ENCODE measurements at regions of chr14 and their contacts with region 1.

Region 1: GRCh38 chr14:91413547-91414474 is 3.8 kb downstream of the CCDC88C start:
- DNase-seq: peak in 1 of 2 donors; percentile 52
- H3K4me3 ChIP-seq: no peak overlapping the region
- H3K27ac ChIP-seq: peak overlapping the region in 1 of 2 donors; percentile 45
- H3K4me1 ChIP-seq: peaks cover 4% of the 10 kb centered on the region in 2 donors
- H3K27me3 ChIP-seq: no peaks in the 10 kb centered on the region
- CTCF ChIP-seq: no peak
- POLR2A ChIP-seq: no peak

Region 2: DNA sequence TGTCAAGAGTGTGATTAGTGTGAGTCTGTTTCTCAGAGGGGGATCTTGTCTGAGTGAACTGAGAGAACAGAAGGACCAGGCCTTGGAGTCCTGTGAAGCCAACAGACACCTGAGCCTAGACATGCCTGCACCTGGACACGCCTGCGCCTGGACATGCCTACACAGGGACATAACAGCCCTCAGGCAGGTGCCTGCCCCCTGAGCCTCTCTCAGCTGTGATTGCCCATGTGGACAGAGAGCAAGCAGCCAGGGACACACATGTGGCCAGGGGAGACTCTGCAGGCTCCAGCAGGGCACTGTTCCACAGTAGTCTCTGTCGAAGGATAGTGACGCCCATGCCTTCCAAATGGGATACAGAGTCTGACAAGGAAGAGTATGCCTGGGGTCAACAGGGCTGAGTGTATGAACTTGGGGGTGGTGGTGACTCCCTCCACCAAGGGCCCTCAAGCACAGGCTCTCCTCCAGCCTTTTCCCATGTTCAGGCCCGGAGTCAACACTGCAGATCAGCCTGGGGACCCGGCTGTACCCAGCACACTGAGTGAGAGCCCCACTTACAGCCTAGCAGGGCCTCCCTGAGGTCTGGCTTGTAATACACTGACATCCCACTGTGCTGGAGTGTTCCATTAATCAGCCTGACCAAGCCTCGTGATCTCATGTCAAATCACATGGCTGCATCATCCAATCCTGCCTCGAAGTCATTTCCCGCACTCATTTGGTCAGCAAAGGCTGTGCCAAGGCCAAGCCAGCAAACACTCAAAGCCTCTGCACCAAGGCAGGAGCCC is 844.0 kb before region 1 on chr14:
- intact Hi-C with region 1: loop called (anchors 5 kb)
- DNase-seq: peak in 1 of 2 donors; percentile 61
- H3K4me3 ChIP-seq: no peak overlapping the region
- H3K27ac ChIP-seq: peak overlapping the region in 1 of 2 donors; percentile 48
- H3K4me1 ChIP-seq: no peaks in the 10 kb centered on the region
- H3K27me3 ChIP-seq: no peaks in the 10 kb centered on the region
- CTCF ChIP-seq: no peak
- POLR2A ChIP-seq: no peak

Region 3: DNA sequence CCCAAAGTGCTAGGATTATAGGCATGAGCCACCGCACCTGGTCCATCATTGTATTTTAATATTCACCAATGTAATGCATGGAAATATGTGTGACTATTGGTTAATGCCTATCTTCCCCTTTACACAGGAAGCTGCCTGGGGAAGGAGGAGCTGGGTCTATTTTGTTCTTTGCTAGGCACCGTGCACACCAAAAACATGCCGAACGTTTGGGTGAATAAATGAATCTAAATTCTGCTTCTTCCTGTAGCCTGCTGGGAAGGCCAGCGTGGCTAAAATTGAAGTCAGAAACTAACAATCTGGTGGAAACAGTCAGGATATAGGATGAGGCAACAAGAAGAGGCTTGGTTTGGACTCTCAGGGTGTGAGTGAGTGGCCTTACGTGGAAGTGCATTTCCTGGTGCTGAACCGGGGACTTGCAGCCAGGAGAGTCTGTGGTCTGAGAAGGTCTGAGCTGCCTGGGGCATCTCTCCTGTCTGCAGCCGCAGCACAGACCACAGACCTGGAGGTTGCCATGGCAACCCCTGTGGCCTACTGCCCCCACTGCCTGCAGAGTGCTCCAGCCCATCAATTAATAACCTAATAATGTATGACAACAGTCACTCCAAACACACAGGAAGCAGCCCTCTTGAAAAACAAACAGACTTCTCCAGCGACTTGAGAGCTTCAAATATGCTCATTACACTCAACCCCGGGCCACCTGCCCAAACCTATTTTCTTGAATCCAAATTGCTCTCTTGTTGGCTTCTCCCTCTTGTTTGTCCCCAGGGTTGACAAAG is 163.8 kb before region 1 on chr14:
- intact Hi-C with region 1: no loop called
- DNase-seq: no peak
- H3K4me3 ChIP-seq: no peak overlapping the region
- H3K27ac ChIP-seq: peak overlapping the region; percentile 43 to 54
- H3K4me1 ChIP-seq: peaks cover 0 to 4% of the 10 kb centered on the region in 2 donors
- H3K27me3 ChIP-seq: no peaks in the 10 kb centered on the region
- CTCF ChIP-seq: peak in 1 of 3 donors; percentile 16
- POLR2A ChIP-seq: no peak

Region 4: GRCh38 chr14:91424813-91425530 is 11.2 kb after region 1 on chr14:
- intact Hi-C with region 1: loop called (anchors 1 kb)
- DNase-seq: no peak
- H3K4me3 ChIP-seq: no peak overlapping the region
- H3K27ac ChIP-seq: no peak overlapping the region
- H3K4me1 ChIP-seq: no peaks in the 10 kb centered on the region
- H3K27me3 ChIP-seq: no peaks in the 10 kb centered on the region
- CTCF ChIP-seq: no peak
- POLR2A ChIP-seq: no peak